Activated CD8-positive, alpha-beta memory T cell treated with anti-CD3 and anti-CD28 coated beads, Interleukin-2, amount 10 ng/mL, durations not matched to agents 7 days and 5 days (primary cell): ENCODE measurements at regions of chr9 and their contacts with region 1.

Region 1: GRCh38 chr9:131590908-131591844 is 45.9 kb downstream of the PRRT1B start:
- DNase-seq: peak; percentile 85
- ATAC-seq: peak; percentile 89
- H3K4me3 Mint-ChIP-seq: no peak overlapping the region
- H3K27ac Mint-ChIP-seq: peak overlapping the region; percentile 85
- H3K4me1 Mint-ChIP-seq: peaks cover 44% of the 10 kb centered on the region
- H3K27me3 Mint-ChIP-seq: no peaks in the 10 kb centered on the region

Region 2: GRCh38 chr9:131530920-131531832 is 60.0 kb before region 1 on chr9 and contains the start of gene UCK1:
- CTCF ChIA-PET with region 1: no interaction called
- DNase-seq: peak; percentile 79
- ATAC-seq: peak; percentile 96
- H3K4me3 Mint-ChIP-seq: peak within 1 kb of the TSS; percentile 77
- H3K27ac Mint-ChIP-seq: peak within 1 kb of the TSS; percentile 67
- H3K4me1 Mint-ChIP-seq: peaks cover 21% of the 10 kb centered on the region
- H3K27me3 Mint-ChIP-seq: no peaks in the 10 kb centered on the region
- total RNA-seq, gene UCK1: 26.1 to 29.6 TPM

Region 3: GRCh38 chr9:131567910-131568309 is 23.3 kb before region 1 on chr9:
- CTCF ChIA-PET with region 1: no interaction called
- DNase-seq: no peak
- ATAC-seq: no peak
- H3K4me3 Mint-ChIP-seq: no peak overlapping the region
- H3K27ac Mint-ChIP-seq: no peak overlapping the region
- H3K4me1 Mint-ChIP-seq: peaks cover 4% of the 10 kb centered on the region
- H3K27me3 Mint-ChIP-seq: no peaks in the 10 kb centered on the region

Region 4: DNA sequence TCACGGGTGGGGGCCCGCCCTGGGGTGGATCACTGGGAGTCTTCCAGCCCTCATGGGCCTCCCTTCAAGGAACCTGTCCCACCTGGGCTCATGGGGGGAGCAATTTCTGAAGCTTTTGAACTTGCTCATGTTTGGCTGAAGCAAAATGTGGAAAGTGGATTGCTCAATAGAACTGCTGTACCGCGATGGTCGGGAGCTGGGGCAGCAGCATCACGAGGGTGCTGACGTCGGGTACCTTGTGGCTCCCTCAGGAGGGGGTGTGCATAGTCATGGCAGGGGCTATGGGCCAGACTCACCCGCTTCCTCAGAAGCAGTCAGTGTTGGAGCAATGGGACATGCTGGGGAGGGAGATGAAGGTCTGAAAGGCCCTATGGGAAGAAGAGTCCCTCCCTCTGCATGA is 12.0 kb after region 1 on chr9:
- CTCF ChIA-PET with region 1: interaction called, 12 read pairs
- DNase-seq: no peak
- ATAC-seq: no peak
- H3K4me3 Mint-ChIP-seq: no peak overlapping the region
- H3K27ac Mint-ChIP-seq: peak overlapping the region; percentile 21
- H3K4me1 Mint-ChIP-seq: no peaks in the 10 kb centered on the region
- H3K27me3 Mint-ChIP-seq: no peaks in the 10 kb centered on the region